Esophagus muscularis mucosa (tissue), 4 donors: ENCODE measurements at regions of chr5 and their contacts with region 1.

Region 1: DNA sequence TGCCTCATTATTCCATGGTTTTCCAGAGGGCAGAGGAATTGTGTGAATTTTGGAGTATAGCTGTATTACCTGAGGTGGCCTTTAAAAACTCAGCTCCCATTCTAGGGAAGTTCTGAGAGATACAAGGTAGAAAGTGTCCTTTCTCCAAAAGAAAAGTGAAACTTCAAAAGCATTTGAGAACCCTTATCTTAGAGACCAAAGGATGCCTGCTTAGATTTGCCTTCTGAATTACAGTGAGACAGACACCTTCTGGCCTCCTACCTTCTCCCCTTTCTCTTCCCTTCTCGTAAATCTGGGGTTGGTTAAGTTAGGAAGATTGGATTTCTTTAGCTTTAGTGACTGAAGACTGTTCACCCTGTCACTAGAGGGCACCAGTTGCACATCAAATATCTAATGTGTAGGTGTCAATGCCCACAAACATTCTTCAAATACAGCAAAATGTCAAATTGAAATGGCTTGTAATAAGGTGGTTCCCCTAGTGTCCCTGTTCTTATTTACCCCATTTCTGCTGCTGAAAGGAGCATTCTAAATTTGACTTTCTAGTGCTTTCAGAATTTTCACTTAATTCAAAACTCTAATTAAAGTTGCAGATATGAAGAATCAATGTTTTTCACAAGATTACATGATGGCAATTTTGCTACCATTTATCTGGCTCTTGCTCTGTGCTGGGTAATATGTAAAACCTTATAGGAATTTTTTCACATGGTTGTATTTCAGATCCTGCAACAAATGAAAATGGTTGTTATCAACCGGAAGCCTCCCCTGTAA is 46.7 kb downstream of the PRRC1 start:
- DNase-seq: no peak
- H3K4me3 ChIP-seq: no peak overlapping the region
- H3K27ac ChIP-seq: peak overlapping the region; percentile 55 to 61 (median 57)
- H3K4me1 ChIP-seq: peaks cover 8 to 52% (median 41%) of the 10 kb centered on the region in 4 donors
- H3K27me3 ChIP-seq: no peaks in the 10 kb centered on the region
- CTCF ChIP-seq: peak; percentile 72 to 78 (median 73)
- EP300 ChIP-seq: no peak
- POLR2A ChIP-seq: no peak

Region 2: GRCh38 chr5:127705120-127705892 is 141.1 kb after region 1 on chr5:
- intact Hi-C with region 1: no loop called
- DNase-seq: no peak
- H3K4me3 ChIP-seq: no peak overlapping the region
- H3K27ac ChIP-seq: peak overlapping the region; percentile 56 to 77 (median 60)
- H3K4me1 ChIP-seq: peaks cover 24 to 64% (median 57%) of the 10 kb centered on the region in 4 donors
- H3K27me3 ChIP-seq: no peaks in the 10 kb centered on the region
- CTCF ChIP-seq: no peak
- EP300 ChIP-seq: no peak
- POLR2A ChIP-seq: no peak

Region 3: GRCh38 chr5:127757576-127757975 is 193.4 kb after region 1 on chr5:
- intact Hi-C with region 1: loop called (anchors 5 kb)
- DNase-seq: no peak
- H3K4me3 ChIP-seq: no peak overlapping the region
- H3K27ac ChIP-seq: peak overlapping the region; percentile 5 to 52 (median 26)
- H3K4me1 ChIP-seq: peaks cover 4 to 53% (median 49%) of the 10 kb centered on the region in 4 donors
- H3K27me3 ChIP-seq: no peaks in the 10 kb centered on the region
- CTCF ChIP-seq: peak; percentile 43 to 55 (median 46)
- EP300 ChIP-seq: no peak
- POLR2A ChIP-seq: no peak

Region 4: GRCh38 chr5:127875235-127876021 is 311.2 kb after region 1 on chr5:
- intact Hi-C with region 1: loop called (anchors 10 kb)
- DNase-seq: no peak
- H3K4me3 ChIP-seq: peak overlapping the region in 1 of 4 donors; percentile 4
- H3K27ac ChIP-seq: peak overlapping the region; percentile 52 to 66 (median 58)
- H3K4me1 ChIP-seq: peaks cover 19 to 44% (median 41%) of the 10 kb centered on the region in 4 donors
- H3K27me3 ChIP-seq: no peaks in the 10 kb centered on the region
- CTCF ChIP-seq: peak in 2 of 3 experiments; percentile 16 to 23
- EP300 ChIP-seq: no peak
- POLR2A ChIP-seq: no peak